GM12878 (cell line): ENCODE measurements at regions of chr1 and their contacts with region 1.

Region 1: DNA sequence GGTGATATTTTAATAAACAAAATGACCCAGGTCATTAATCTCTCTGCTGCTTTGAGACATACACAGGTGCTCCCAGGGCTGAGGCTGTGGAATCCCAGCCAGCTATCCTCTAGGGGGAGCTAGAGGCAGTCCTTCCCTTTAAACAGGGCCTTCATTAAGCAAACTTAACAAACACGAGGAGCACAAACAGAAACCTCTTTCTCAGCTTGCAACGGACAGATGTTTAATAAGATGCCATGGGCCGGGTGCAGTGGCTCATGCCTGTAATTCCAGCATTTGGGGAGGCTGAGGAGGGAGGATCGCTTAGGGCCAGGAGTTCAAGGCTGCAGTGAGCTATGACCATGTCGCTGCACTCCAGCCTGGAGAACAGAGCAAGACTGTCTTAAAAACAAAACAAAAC is 106.7 kb downstream of the HIVEP3 start:
- DNase-seq: no peak
- ATAC-seq: peak; percentile 70
- H3K4me3 ChIP-seq: no peak overlapping the region
- H3K27ac ChIP-seq: no peak overlapping the region
- H3K4me1 ChIP-seq: peaks cover 43% of the 10 kb centered on the region
- H3K27me3 ChIP-seq: no peaks in the 10 kb centered on the region
- CTCF ChIP-seq: peak; percentile 67 to 72 (median 70)
- EP300 ChIP-seq: no peak
- POLR2A ChIP-seq: no peak
- RAD21 ChIP-seq: peak; percentile 77

Region 2: GRCh38 chr1:41455479-41456332 is 356.3 kb before region 1 on chr1:
- CTCF ChIA-PET with region 1: no interaction called
- POLR2A ChIA-PET with region 1: no interaction called
- RAD21 ChIA-PET with region 1: no interaction called
- SMC1A ChIA-PET with region 1: no interaction called
- in situ Hi-C with region 1: no loop called
- intact Hi-C with region 1: no loop called
- DNase-seq: no peak
- ATAC-seq: no peak
- H3K4me3 ChIP-seq: no peak overlapping the region
- H3K27ac ChIP-seq: no peak overlapping the region
- H3K4me1 ChIP-seq: no peaks in the 10 kb centered on the region
- H3K27me3 ChIP-seq: peaks cover 0 to 3% of the 10 kb centered on the region in 2 experiments; a peak in 2 of 4 replicates
- CTCF ChIP-seq: no peak
- EP300 ChIP-seq: no peak
- POLR2A ChIP-seq: no peak
- RAD21 ChIP-seq: no peak

Region 3: DNA sequence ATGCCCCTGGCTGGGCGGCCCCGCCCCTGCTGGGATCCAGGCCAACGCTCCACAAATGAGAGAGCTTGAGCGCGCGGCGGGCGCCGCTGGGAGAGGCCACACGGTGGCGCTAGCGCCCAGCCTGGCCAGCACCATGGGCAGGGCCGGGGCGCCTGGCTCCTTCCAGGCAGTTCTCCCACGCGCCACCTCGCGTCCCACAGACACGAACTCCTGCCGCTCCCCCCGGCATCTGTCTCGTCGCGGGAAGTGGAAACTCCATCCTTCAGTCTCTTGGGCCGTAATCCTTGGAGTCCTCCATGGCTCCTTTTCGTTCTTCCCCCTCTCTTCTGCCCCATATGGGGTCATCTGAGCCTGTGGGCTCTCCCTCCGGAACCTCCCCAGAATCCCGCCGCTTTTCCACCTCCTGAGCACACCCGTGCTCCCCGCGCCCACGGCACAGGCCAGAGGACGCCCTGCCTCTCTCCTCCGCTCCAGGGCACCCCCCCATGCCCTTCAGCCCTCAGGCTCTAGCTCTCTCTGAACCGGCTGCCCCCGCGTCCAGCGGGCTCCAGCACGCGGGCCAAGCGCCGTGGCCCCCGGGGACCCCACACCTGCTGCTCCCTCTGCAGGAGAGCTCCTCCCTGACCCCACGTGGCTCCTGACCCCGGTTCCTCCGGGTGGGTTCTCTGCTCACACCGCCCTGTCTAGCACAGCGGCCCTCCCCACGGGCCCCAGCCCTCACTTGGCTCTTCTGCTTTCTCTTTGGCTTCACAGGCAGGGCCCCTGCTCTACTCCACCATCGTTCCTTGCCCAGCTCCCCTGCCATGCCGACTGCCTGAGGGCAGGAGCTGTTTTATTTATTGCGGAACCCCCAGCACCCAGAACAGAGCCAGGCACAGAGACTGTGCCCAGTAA is 295.6 kb before region 1 on chr1:
- CTCF ChIA-PET with region 1: interaction called, 17 read pairs
- POLR2A ChIA-PET with region 1: interaction called, 3 read pairs
- RAD21 ChIA-PET with region 1: interaction called, 7 read pairs
- SMC1A ChIA-PET with region 1: interaction called, 7 read pairs
- in situ Hi-C with region 1: no loop called
- intact Hi-C with region 1: no loop called
- DNase-seq: no peak
- ATAC-seq: peak; percentile 96
- H3K4me3 ChIP-seq: no peak overlapping the region
- H3K27ac ChIP-seq: no peak overlapping the region; the same call in 1 of the 2 replicates
- H3K4me1 ChIP-seq: peaks cover 6% of the 10 kb centered on the region; the same call in 1 of the 2 replicates
- H3K27me3 ChIP-seq: no peaks in the 10 kb centered on the region
- CTCF ChIP-seq: peak; percentile 86 to 93 (median 90)
- EP300 ChIP-seq: no peak
- POLR2A ChIP-seq: no peak
- RAD21 ChIP-seq: peak; percentile 71

Region 4: DNA sequence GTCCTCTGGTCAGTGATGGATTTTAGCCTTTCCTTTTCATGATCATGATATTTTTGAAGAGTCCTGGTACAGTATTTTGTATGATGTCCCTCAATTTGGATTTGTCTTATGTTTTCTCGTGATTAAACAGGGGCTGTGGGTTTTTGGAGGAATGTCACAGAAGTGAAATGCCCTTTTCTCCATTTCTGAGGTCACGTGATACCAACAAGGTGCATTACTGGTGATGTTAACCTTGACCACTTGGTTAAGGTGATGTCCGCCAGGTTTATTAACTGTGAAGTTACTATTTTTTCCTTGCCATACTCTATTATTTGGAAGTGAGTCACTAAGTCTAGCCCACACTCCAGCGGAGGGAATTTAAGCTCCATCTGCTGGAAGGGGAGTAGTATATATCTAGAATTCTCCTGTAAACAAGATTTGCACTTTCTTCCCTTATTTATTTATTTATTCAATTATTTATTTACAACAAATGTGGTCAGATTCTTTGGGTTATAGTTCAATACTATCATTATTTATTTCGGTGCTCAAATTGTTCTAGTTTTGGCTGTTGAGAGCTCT is 16.8 kb before region 1 on chr1:
- CTCF ChIA-PET with region 1: interaction called, 5 read pairs
- POLR2A ChIA-PET with region 1: no interaction called
- RAD21 ChIA-PET with region 1: interaction called, 18 read pairs
- SMC1A ChIA-PET with region 1: interaction called, 10 read pairs
- in situ Hi-C with region 1: no loop called
- intact Hi-C with region 1: no loop called
- DNase-seq: no peak
- ATAC-seq: no peak
- H3K4me3 ChIP-seq: no peak overlapping the region
- H3K27ac ChIP-seq: no peak overlapping the region
- H3K4me1 ChIP-seq: peaks cover 27% of the 10 kb centered on the region
- H3K27me3 ChIP-seq: no peaks in the 10 kb centered on the region
- CTCF ChIP-seq: 0 out of 6 replicates have a peak, but pooled peaks of 1 of the 3 experiments have one; percentile 1
- EP300 ChIP-seq: no peak
- POLR2A ChIP-seq: no peak
- RAD21 ChIP-seq: 0 out of 2 replicates have a peak, but pooled peaks have one; percentile 13

Region 5: DNA sequence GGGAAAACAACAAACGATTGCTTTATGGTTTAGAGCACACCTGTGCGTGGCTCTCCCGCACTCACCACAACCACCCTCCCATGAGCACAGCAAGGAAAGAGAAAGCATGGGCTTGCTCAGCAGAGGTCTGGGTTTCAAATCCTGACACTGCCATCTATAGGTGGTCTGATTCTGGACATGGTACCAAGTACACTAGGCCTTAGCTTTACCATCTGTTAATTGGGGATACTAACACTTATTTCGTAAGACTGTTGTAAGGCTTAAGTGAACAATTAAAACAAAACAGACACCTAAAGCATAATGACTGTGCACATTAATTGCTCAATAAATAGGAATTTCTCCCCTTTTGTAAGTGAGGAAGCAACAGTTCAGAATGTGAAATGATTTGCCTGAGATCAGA is 56.5 kb after region 1 on chr1:
- CTCF ChIA-PET with region 1: interaction called, 24 read pairs
- POLR2A ChIA-PET with region 1: interaction called, 4 read pairs
- RAD21 ChIA-PET with region 1: interaction called, 32 read pairs
- SMC1A ChIA-PET with region 1: interaction called, 27 read pairs
- in situ Hi-C with region 1: no loop called
- intact Hi-C with region 1: no loop called
- DNase-seq: peak; percentile 63
- ATAC-seq: peak; percentile 96
- H3K4me3 ChIP-seq: no peak overlapping the region
- H3K27ac ChIP-seq: peak overlapping the region; percentile 27; the same call in 1 of the 2 replicates
- H3K4me1 ChIP-seq: peaks cover 19% of the 10 kb centered on the region
- H3K27me3 ChIP-seq: no peaks in the 10 kb centered on the region
- CTCF ChIP-seq: peak; percentile 60 to 71 (median 66); a peak in 5 of 6 replicates
- EP300 ChIP-seq: no peak
- POLR2A ChIP-seq: no peak
- RAD21 ChIP-seq: peak; percentile 60

Region 6: GRCh38 chr1:41925712-41926111 is 113.7 kb after region 1 on chr1:
- CTCF ChIA-PET with region 1: no interaction called
- POLR2A ChIA-PET with region 1: no interaction called
- RAD21 ChIA-PET with region 1: no interaction called
- SMC1A ChIA-PET with region 1: no interaction called
- in situ Hi-C with region 1: no loop called
- intact Hi-C with region 1: no loop called
- DNase-seq: no peak
- ATAC-seq: peak; percentile 48; the same call in 2 of the 3 replicates
- H3K4me3 ChIP-seq: no peak overlapping the region
- H3K27ac ChIP-seq: no peak overlapping the region
- H3K4me1 ChIP-seq: no peaks in the 10 kb centered on the region
- H3K27me3 ChIP-seq: no peaks in the 10 kb centered on the region
- CTCF ChIP-seq: no peak
- EP300 ChIP-seq: no peak
- POLR2A ChIP-seq: no peak
- RAD21 ChIP-seq: no peak

Region 7: DNA sequence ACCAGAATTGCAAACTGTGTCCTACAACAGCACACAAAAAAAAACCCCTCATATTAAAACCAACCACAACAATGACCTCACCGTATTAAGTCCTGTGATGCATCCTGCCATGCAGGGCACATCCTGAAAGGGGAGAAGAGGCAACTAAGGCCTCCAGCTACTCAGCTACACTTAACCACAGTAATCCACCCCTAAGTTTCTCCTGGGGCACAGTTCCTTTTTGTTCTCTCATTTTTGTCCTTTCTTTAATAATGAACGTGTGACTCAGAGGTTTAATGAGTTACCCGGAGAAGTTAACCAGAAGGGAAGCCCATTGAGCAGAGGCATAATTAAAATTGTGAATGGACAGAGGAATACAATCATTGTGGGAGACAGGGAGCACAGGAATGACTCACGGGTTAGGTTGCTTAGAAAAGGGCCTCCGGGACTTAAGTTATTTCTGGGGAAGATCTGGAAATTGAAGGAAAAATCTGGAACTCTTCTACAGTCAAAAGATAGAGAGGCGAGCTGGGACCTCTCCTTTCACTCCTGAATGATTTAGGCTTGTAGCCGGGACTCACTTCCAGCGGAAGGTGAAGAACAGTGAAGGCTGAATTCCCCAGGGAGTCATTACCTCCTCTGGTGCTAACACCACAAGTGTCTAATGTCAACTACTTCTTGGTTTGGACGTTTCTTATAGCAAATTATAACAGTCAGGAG is 143.6 kb after region 1 on chr1:
- CTCF ChIA-PET with region 1: interaction called, 10 read pairs
- POLR2A ChIA-PET with region 1: interaction called, 3 read pairs
- RAD21 ChIA-PET with region 1: interaction called, 6 read pairs
- SMC1A ChIA-PET with region 1: no interaction called
- in situ Hi-C with region 1: no loop called
- intact Hi-C with region 1: loop called (anchors 5 kb)
- DNase-seq: peak; percentile 87
- ATAC-seq: peak; percentile 92
- H3K4me3 ChIP-seq: no peak overlapping the region; the same call in 1 of the 2 replicates
- H3K27ac ChIP-seq: peak overlapping the region; percentile 67
- H3K4me1 ChIP-seq: peaks cover 26% of the 10 kb centered on the region
- H3K27me3 ChIP-seq: no peaks in the 10 kb centered on the region
- CTCF ChIP-seq: no peak
- EP300 ChIP-seq: peak; percentile 43 to 81; a peak in 3 of 4 replicates
- POLR2A ChIP-seq: no peak
- RAD21 ChIP-seq: no peak

Region 8: GRCh38 chr1:42173155-42173933 is 361.3 kb after region 1 on chr1:
- CTCF ChIA-PET with region 1: interaction called, 27 read pairs
- POLR2A ChIA-PET with region 1: no interaction called
- RAD21 ChIA-PET with region 1: interaction called, 15 read pairs
- SMC1A ChIA-PET with region 1: interaction called, 19 read pairs
- in situ Hi-C with region 1: no loop called
- intact Hi-C with region 1: no loop called
- DNase-seq: no peak
- ATAC-seq: peak; percentile 86
- H3K4me3 ChIP-seq: no peak overlapping the region
- H3K27ac ChIP-seq: no peak overlapping the region
- H3K4me1 ChIP-seq: no peaks in the 10 kb centered on the region
- H3K27me3 ChIP-seq: no peaks in the 10 kb centered on the region
- CTCF ChIP-seq: peak; percentile 92 to 98 (median 96)
- EP300 ChIP-seq: no peak
- POLR2A ChIP-seq: no peak
- RAD21 ChIP-seq: peak; percentile 73